ENCODE measurements at regions of chr3 and their contacts with region 1.

Region 1: DNA sequence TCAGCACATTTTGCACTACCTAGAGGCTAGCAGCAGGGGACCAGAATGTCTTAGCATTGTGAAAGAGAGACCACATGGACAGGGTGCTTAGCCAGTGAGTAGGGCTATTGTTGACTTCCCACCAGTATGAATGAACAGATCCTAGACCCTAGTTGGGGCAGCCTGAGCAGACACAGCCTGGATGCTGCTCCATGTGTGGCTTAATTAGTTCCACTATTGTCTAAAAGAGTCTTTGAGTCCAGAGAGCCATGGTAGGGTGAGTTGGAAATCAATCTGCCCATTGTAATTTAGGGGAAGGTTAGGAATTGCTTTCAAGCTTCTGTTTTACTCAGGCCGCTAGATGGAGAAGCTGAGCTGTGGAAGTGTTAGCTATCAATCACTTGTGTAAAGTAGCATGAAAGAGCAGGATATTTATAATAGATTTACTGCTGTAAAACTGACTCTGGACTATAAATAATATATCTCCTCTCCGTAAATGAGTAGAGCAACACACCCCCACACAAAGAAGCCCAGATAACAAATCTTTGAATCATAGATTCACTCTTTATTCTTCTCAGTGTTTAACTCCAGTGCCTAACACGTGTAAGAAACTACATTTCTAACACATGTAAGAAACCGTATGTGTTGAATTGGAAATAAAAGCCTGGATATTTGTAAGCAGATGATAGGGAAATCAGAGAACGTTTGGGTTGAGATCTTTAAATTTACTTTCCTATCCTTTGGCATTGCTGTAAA is 4.1 kb upstream of the GCSAM start:
- DNase-seq: peak; percentile 74
- H3K4me3 Mint-ChIP-seq: no peak overlapping the region
- H3K27ac Mint-ChIP-seq: peak overlapping the region; percentile 22
- H3K4me1 Mint-ChIP-seq: peaks cover 26% of the 10 kb centered on the region
- H3K27me3 Mint-ChIP-seq: no peaks in the 10 kb centered on the region
- CTCF ChIP-seq: peak; percentile 64

Region 2: DNA sequence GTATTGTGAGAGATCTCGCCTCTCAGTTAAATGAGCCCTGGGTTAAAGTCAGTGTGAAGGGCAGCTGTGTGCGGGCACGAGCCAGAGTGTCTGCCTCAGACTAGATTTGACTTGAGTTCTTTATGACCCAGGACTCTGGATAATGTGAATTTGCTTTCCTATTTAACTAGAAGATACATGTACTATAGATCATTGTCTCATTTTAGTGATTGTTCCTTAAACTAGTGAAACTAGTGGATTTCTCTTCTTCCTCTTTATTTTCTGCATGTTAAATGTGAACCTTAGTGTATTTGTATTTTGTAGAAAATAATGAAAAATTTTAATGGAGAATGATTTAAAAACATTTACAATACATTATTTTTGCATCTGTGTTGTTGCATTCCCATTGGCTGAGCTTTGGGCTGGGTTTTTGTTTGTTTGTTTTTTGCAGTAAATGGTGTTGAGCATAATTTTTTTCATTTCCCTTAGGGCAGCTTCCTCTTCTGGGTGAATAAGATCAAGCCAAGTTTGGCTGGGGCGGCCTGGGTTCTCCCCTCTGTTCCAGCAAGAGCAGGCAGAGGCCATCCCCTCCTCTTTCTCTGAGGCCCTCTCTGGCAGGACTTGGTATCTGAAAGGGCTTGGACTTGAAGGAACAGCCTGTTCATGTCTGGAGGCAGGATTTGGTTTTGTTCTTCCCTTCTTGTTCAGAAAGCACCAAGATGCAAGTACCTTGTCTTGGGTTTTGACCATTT is 19.1 kb before region 1 on chr3:
- CTCF ChIA-PET with region 1: interaction called, 23 read pairs
- POLR2A ChIA-PET with region 1: interaction called, 4 read pairs
- intact Hi-C with region 1: no loop called
- DNase-seq: no peak
- H3K4me3 Mint-ChIP-seq: no peak overlapping the region
- H3K27ac Mint-ChIP-seq: peak overlapping the region; percentile 35
- H3K4me1 Mint-ChIP-seq: no peaks in the 10 kb centered on the region
- H3K27me3 Mint-ChIP-seq: no peaks in the 10 kb centered on the region
- CTCF ChIP-seq: no peak

Region 3: DNA sequence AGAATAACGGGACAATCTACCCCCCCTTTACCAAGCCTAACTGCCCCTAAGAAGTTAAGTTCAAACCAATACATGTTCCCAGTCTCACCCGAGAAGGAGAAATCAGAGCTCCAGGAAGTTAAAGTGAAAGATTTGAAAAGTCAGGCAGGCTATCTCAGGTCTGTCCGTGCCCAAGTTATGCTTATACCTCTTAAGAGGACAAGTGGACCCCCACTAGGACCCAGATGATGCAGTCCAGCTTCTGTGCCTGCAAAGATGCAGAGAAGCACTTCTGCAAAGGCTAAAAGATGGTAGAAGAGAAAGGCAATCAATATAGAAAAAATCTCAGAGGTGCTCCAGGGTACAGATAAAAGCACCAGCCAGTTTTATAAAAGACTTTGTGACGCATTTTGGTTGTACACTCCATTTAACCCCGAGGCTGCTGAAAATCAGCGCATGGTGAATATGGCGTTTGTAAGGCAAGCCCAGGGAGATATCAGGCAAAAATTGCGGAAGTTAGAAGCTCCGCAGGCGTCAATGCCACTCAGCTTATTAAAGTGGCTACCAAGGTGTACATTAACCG is 166.7 kb after region 1 on chr3:
- CTCF ChIA-PET with region 1: interaction called, 11 read pairs
- POLR2A ChIA-PET with region 1: interaction called, 4 read pairs
- intact Hi-C with region 1: no loop called
- DNase-seq: no peak
- H3K4me3 Mint-ChIP-seq: no peak overlapping the region
- H3K27ac Mint-ChIP-seq: no peak overlapping the region
- H3K4me1 Mint-ChIP-seq: peaks cover 7% of the 10 kb centered on the region
- H3K27me3 Mint-ChIP-seq: no peaks in the 10 kb centered on the region
- CTCF ChIP-seq: no peak

Region 4: DNA sequence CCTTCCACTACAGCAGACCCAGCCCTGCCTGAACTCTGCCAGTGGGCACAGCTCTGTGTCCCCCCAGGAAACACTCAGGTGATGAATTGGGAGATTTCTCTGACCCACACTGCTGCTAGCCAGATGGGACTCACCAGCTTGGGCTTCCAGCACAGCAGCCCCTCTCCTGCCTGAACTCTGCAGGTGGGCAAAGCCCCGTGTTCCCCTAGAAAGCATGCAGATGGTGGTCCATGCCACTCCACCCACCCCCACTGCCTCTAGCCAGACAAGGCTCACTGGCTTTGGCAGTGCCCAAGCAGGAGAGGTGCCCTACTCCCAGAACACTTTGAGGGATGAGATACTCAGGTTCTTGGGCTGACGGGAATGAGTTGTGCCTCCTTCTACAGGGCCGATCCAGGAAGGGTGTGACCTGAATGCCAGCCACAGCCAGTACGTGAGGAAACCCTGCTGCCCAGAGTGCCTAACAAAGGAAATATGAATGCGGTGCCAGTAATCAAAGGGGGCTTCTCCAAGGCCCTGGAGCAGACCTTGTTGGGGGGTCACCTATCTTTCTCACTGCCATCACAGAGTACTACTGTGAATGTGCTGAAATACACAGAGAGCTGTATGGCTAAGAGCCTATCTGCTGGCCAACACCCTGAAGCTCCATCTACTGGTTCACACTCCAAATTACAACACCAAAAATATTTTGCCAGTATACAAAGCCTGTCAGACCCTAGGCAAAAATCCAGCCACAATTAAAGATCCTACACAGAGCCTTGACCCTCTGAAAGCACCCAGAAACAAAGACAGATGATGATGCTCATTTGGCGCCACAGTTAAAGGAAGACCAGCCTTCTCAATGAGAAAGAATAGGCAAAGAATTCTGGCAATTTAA is 300.3 kb after region 1 on chr3:
- CTCF ChIA-PET with region 1: interaction called, 4 read pairs
- POLR2A ChIA-PET with region 1: no interaction called
- intact Hi-C with region 1: loop called (anchors 2 kb)
- DNase-seq: peak; percentile 63
- H3K4me3 Mint-ChIP-seq: no peak overlapping the region
- H3K27ac Mint-ChIP-seq: no peak overlapping the region
- H3K4me1 Mint-ChIP-seq: no peaks in the 10 kb centered on the region
- H3K27me3 Mint-ChIP-seq: no peaks in the 10 kb centered on the region
- CTCF ChIP-seq: peak; percentile 51

Region 5: DNA sequence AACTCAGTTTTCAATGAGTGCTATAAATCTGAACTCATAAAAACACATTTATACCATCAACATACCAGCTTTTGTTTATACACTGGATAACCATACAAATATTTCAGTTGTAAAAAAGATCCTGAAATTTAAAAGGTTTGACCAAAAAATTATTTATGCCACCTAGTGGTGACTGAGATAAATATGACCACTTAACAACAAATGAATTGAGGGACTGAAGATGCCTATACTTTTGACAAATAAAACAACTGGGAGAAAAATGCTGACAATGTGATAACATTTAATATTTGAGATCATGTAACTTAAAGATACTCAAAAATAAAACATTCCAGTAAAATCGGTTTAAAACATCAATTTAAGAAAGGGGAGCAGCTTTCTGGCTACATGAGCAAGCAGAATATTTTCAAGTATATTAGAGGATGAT is 394.2 kb after region 1 on chr3:
- CTCF ChIA-PET with region 1: interaction called, 5 read pairs
- POLR2A ChIA-PET with region 1: no interaction called
- intact Hi-C with region 1: loop called (anchors 1 kb)
- DNase-seq: peak; percentile 34
- H3K4me3 Mint-ChIP-seq: no peak overlapping the region
- H3K27ac Mint-ChIP-seq: no peak overlapping the region
- H3K4me1 Mint-ChIP-seq: no peaks in the 10 kb centered on the region
- H3K27me3 Mint-ChIP-seq: no peaks in the 10 kb centered on the region
- CTCF ChIP-seq: peak; percentile 42